T-cell (primary cell): ENCODE measurements at regions of chr1 and their contacts with region 1.

Region 1: GRCh38 chr1:182977480-182977879 is 24.5 kb upstream of the SHCBP1L start:
- DNase-seq: no peak
- ATAC-seq: no peak
- H3K4me3 ChIP-seq: no peak overlapping the region
- H3K4me3 Mint-ChIP-seq: no peak overlapping the region
- H3K27ac ChIP-seq: no peak overlapping the region
- H3K27ac Mint-ChIP-seq: no peak overlapping the region
- H3K4me1 ChIP-seq: no peaks in the 10 kb centered on the region
- H3K4me1 Mint-ChIP-seq: no peaks in the 10 kb centered on the region
- H3K27me3 ChIP-seq: no peaks in the 10 kb centered on the region
- H3K27me3 Mint-ChIP-seq: peaks cover 10 to 17% of the 10 kb centered on the region in 2 donors

Region 2: GRCh38 chr1:182917378-182917777 is 60.1 kb before region 1 on chr1:
- CTCF ChIA-PET with region 1: no interaction called
- POLR2A ChIA-PET with region 1: no interaction called
- DNase-seq: no peak
- ATAC-seq: no peak
- H3K4me3 ChIP-seq: no peak overlapping the region
- H3K4me3 Mint-ChIP-seq: no peak overlapping the region
- H3K27ac ChIP-seq: no peak overlapping the region
- H3K27ac Mint-ChIP-seq: no peak overlapping the region
- H3K4me1 ChIP-seq: no peaks in the 10 kb centered on the region
- H3K4me1 Mint-ChIP-seq: no peaks in the 10 kb centered on the region
- H3K27me3 ChIP-seq: peaks cover 0 to 15% of the 10 kb centered on the region in 2 experiments
- H3K27me3 Mint-ChIP-seq: peaks cover 31 to 40% of the 10 kb centered on the region in 2 donors

Region 3: GRCh38 chr1:183030053-183030452 is 52.6 kb after region 1 on chr1:
- CTCF ChIA-PET with region 1: no interaction called
- POLR2A ChIA-PET with region 1: interaction called in 1 of 2 experiments, 15 read pairs
- DNase-seq: no peak
- ATAC-seq: no peak
- H3K4me3 ChIP-seq: no peak overlapping the region
- H3K4me3 Mint-ChIP-seq: no peak overlapping the region
- H3K27ac ChIP-seq: no peak overlapping the region
- H3K27ac Mint-ChIP-seq: no peak overlapping the region
- H3K4me1 ChIP-seq: peaks cover 5 to 6% of the 10 kb centered on the region in 2 experiments
- H3K4me1 Mint-ChIP-seq: peaks cover 14 to 26% (median 20%) of the 10 kb centered on the region in 3 donors
- H3K27me3 ChIP-seq: peaks cover 0 to 13% of the 10 kb centered on the region in 2 experiments
- H3K27me3 Mint-ChIP-seq: peaks cover 54 to 69% of the 10 kb centered on the region in 2 donors